Transverse colon (tissue), 4 donors: ENCODE measurements at regions of chr1 and their contacts with region 1.

Region 1: DNA sequence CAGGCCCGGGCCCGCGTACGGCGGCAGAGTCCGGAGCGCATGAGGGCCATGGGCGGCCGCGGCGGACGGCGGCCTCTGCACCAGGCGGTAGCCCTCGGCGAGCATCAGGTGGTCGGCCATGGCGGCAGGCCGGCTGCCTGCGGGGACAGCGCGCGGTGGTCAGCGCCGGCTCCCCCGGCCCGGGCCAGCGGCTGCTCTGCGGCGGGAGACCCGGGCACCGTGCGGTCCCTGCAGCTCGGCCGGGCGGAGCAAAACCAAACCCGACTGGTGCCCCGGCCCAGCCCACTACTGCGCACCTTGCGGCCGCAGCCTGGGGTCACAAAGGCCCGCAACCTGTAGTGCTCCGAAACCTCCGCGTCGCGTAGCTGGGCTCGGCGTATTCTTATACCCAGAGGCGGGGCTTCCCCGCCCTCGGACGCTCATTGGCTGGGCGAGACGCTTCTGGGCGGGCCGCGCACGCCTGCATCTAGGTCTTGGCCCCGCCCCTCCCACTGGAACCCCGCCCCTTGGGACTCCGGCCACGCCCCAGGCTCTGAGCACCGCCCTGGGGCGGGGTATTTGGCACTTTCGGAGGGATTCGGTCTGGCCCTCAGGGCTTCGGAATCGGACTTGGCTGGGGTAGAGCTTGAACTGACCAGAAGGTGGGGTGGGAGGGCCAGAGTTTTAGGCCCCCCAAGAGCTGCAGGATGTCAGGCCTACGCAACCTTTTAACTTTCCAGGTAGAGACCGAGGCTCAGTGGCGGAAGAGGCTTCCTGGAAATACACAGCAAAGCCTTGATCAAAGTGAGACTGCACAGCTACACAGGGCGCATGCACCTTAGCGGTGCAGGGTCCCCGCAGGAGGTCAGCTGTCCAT is at the start of gene CITED4:
- DNase-seq: peak; percentile 95
- H3K4me3 ChIP-seq: peak within 1 kb of the TSS; percentile 68 to 86 (median 82)
- H3K27ac ChIP-seq: peak within 1 kb of the TSS; percentile 83 to 94 (median 88)
- H3K4me1 ChIP-seq: peaks cover 4 to 29% (median 20%) of the 10 kb centered on the region in 4 donors
- H3K27me3 ChIP-seq: peaks cover 4% of the 10 kb centered on the region
- CTCF ChIP-seq: peak in 3 of 5 experiments; percentile 11 to 19 (median 14)
- EP300 ChIP-seq: no peak
- POLR2A ChIP-seq: peak; percentile 92
- total RNA-seq, gene CITED4: 7.6 to 30.1 (median 16.5) TPM

Region 2: GRCh38 chr1:40802078-40802741 is 60.0 kb before region 1 on chr1:
- in situ Hi-C with region 1: no loop called
- intact Hi-C with region 1: loop called (anchors 2 kb)
- DNase-seq: peak; percentile 90
- H3K4me3 ChIP-seq: peak overlapping the region in 3 of 4 donors; percentile 34 to 56 (median 38)
- H3K27ac ChIP-seq: peak overlapping the region; percentile 77 to 86 (median 82)
- H3K4me1 ChIP-seq: peaks cover 28 to 59% (median 42%) of the 10 kb centered on the region in 4 donors
- H3K27me3 ChIP-seq: no peaks in the 10 kb centered on the region
- CTCF ChIP-seq: no peak
- EP300 ChIP-seq: no peak
- POLR2A ChIP-seq: no peak

Region 3: GRCh38 chr1:40944326-40944725 is 82.1 kb after region 1 on chr1:
- in situ Hi-C with region 1: no loop called
- intact Hi-C with region 1: loop called (anchors 2 kb)
- DNase-seq: peak; percentile 19
- H3K4me3 ChIP-seq: no peak overlapping the region
- H3K27ac ChIP-seq: peak overlapping the region; percentile 71 to 87 (median 81)
- H3K4me1 ChIP-seq: peaks cover 4 to 26% (median 11%) of the 10 kb centered on the region in 4 donors
- H3K27me3 ChIP-seq: no peaks in the 10 kb centered on the region
- CTCF ChIP-seq: no peak
- EP300 ChIP-seq: peak; percentile 75
- POLR2A ChIP-seq: no peak